Posterior vena cava (tissue), 2 donors: ENCODE measurements at regions of chr10 and their contacts with region 1.

Region 1: GRCh38 chr10:76547352-76547972 is 1090.1 kb downstream of the KCNMA1 start:
- DNase-seq: peak; percentile 88

Region 2: GRCh38 chr10:76303682-76304316 is 243.7 kb before region 1 on chr10:
- intact Hi-C with region 1: loop called in 1 of 2 experiments (anchors 10 kb)
- DNase-seq: peak; percentile 86